ENCODE measurements at regions of chr12 and their contacts with region 1.

Region 1: DNA sequence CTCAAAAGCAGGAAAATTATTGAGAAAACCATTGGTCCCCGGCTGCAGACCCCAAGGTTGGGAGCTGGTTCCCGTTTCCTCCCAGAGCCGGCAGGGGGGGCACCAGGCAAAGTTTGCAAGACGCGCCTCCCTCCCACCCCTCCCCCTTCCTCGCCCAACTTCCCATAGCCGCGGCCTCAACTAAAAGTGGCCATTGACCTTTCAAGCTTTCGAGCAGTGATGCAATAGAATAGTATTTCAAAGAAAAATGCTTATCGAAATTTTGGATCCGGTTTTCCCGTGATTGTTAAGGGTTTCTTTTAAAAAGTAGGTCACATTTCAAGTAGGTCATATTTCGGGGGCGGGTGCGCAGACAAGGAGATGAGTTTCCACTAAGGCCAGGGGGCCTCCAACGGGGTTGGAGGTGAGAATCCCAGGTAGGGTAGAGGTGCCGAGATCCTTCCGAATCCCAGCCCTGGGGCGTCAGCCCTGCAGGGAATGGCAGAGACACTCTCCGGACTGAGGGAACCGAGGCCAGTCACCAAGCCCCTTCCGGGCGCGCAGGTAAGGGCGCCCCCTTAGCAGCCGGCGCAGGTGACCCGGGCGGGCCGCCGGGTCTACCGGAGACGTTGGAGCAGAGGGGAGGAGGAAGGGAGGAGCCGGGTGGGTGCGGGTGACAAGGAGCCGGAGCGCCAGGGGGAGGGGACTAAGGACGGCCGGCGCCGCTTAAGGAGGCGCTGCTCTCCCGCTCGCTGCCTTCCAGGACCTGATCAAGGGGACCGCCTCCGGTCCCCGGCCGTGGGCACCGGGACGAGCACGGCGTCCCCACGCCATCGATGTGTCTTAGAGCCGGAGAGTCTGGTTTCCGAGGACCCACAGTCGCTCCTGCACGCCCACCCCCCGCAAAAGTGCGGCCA is 2.6 kb upstream of the SOCS2 start:
- DNase-seq: peak; percentile 49 to 88 (median 68)
- ATAC-seq: peak; percentile 44
- H3K4me3 ChIP-seq: peak overlapping the region; percentile 97
- H3K4me3 Mint-ChIP-seq: peak overlapping the region; percentile 95
- H3K27ac ChIP-seq: peak overlapping the region; percentile 67 to 82
- H3K27ac Mint-ChIP-seq: peak overlapping the region; percentile 86
- H3K4me1 ChIP-seq: peaks cover 43% of the 10 kb centered on the region
- H3K4me1 Mint-ChIP-seq: peaks cover 28% of the 10 kb centered on the region
- H3K27me3 ChIP-seq: no peaks in the 10 kb centered on the region
- H3K27me3 Mint-ChIP-seq: no peaks in the 10 kb centered on the region
- CTCF ChIP-seq: peak; percentile 85

Region 2: GRCh38 chr12:93378373-93379325 is 191.3 kb before region 1 on chr12:
- CTCF ChIA-PET with region 1: no interaction called
- POLR2A ChIA-PET with region 1: no interaction called
- intact Hi-C with region 1: loop called in 1 of 2 experiments (anchors 5 kb)
- DNase-seq: peak; percentile 33 to 86 (median 47)
- ATAC-seq: peak; percentile 54
- H3K4me3 ChIP-seq: peak overlapping the region; percentile 74
- H3K4me3 Mint-ChIP-seq: peak overlapping the region; percentile 100
- H3K27ac ChIP-seq: peak overlapping the region; percentile 85 to 88
- H3K27ac Mint-ChIP-seq: peak overlapping the region; percentile 99
- H3K4me1 ChIP-seq: peaks cover 36% of the 10 kb centered on the region
- H3K4me1 Mint-ChIP-seq: peaks cover 52% of the 10 kb centered on the region
- H3K27me3 ChIP-seq: no peaks in the 10 kb centered on the region
- H3K27me3 Mint-ChIP-seq: no peaks in the 10 kb centered on the region
- CTCF ChIP-seq: no peak

Region 3: GRCh38 chr12:93502802-93503623 is 66.9 kb before region 1 on chr12:
- CTCF ChIA-PET with region 1: interaction called, 10 read pairs
- POLR2A ChIA-PET with region 1: interaction called, 3 read pairs
- intact Hi-C with region 1: loop called (anchors 2 to 5 kb)
- DNase-seq: peak; percentile 36 to 79 (median 59)
- ATAC-seq: peak; percentile 29
- H3K4me3 ChIP-seq: no peak overlapping the region
- H3K4me3 Mint-ChIP-seq: no peak overlapping the region
- H3K27ac ChIP-seq: no peak overlapping the region
- H3K27ac Mint-ChIP-seq: no peak overlapping the region
- H3K4me1 ChIP-seq: no peaks in the 10 kb centered on the region
- H3K4me1 Mint-ChIP-seq: no peaks in the 10 kb centered on the region
- H3K27me3 ChIP-seq: no peaks in the 10 kb centered on the region
- H3K27me3 Mint-ChIP-seq: no peaks in the 10 kb centered on the region
- CTCF ChIP-seq: peak; percentile 91

Region 4: GRCh38 chr12:93766796-93767523 is 197.1 kb after region 1 on chr12:
- CTCF ChIA-PET with region 1: interaction called, 7 read pairs
- POLR2A ChIA-PET with region 1: no interaction called
- intact Hi-C with region 1: loop called in 1 of 2 experiments (anchors 5 kb)
- DNase-seq: peak in 9 of 14 experiments; percentile 9 to 68 (median 23)
- ATAC-seq: peak; percentile 63
- H3K4me3 ChIP-seq: no peak overlapping the region
- H3K4me3 Mint-ChIP-seq: no peak overlapping the region
- H3K27ac ChIP-seq: no peak overlapping the region
- H3K27ac Mint-ChIP-seq: no peak overlapping the region
- H3K4me1 ChIP-seq: peaks cover 2% of the 10 kb centered on the region
- H3K4me1 Mint-ChIP-seq: peaks cover 27% of the 10 kb centered on the region
- H3K27me3 ChIP-seq: no peaks in the 10 kb centered on the region
- H3K27me3 Mint-ChIP-seq: no peaks in the 10 kb centered on the region
- CTCF ChIP-seq: peak; percentile 26

Region 5: GRCh38 chr12:93979189-93979588 is 409.3 kb after region 1 on chr12:
- CTCF ChIA-PET with region 1: interaction called, 5 read pairs
- POLR2A ChIA-PET with region 1: no interaction called
- intact Hi-C with region 1: loop called in 1 of 2 experiments (anchors 5 kb)
- DNase-seq: peak in 7 of 14 experiments; percentile 3 to 56 (median 32)
- ATAC-seq: no peak
- H3K4me3 ChIP-seq: no peak overlapping the region
- H3K4me3 Mint-ChIP-seq: no peak overlapping the region
- H3K27ac ChIP-seq: no peak overlapping the region
- H3K27ac Mint-ChIP-seq: no peak overlapping the region
- H3K4me1 ChIP-seq: no peaks in the 10 kb centered on the region
- H3K4me1 Mint-ChIP-seq: peaks cover 21% of the 10 kb centered on the region
- H3K27me3 ChIP-seq: no peaks in the 10 kb centered on the region
- H3K27me3 Mint-ChIP-seq: no peaks in the 10 kb centered on the region
- CTCF ChIP-seq: peak; percentile 13

Region 6: DNA sequence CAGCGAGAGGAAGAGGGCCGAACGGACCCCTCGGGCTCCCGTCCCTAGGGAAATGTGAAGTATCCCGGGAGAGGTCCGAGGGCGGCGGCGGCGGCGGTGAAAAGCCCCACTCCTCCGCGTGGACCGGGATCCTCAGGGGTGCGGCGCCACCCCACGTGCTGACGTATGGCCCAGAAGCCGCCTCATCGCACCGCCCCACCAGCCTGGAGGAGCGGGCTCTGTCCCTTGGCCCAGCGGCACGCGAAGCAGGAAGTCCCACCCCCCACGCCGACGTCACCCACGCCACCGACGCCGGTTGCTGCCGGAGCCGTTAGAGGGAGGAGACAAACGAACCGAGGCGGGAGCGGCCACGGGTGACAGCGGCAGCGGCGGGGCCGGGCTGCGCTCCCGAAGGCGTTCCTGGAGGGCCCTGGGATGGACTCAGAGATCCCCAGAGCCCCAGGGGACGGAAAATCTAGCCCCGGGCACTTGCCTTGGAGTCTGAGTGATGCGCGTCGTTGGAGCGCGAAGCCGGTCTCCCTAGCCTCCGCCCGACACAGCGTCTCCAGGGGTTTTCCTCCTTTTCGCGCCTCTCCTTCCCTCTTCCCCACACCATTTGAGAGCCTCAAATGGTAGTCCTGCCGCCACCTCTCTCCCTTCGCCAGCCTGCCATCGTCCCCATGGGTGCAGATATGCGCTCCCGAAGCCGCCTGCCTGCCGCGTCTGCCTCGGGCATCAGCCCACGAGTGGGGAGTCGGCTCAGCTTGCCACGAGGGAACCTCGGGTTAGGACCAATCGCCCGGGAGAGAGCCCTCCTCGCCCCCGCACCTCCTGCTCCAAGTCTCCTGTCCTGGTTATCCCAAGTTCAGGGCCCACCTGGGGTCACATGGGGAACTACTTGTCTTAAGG is 890.1 kb after region 1 on chr12 and contains the start of gene CEP83:
- CTCF ChIA-PET with region 1: no interaction called
- POLR2A ChIA-PET with region 1: no interaction called
- intact Hi-C with region 1: loop called in 1 of 2 experiments (anchors 10 kb)
- DNase-seq: peak; percentile 89 to 99 (median 98)
- ATAC-seq: peak; percentile 97
- H3K4me3 ChIP-seq: peak within 1 kb of the TSS; percentile 96
- H3K4me3 Mint-ChIP-seq: peak within 1 kb of the TSS; percentile 94
- H3K27ac ChIP-seq: peak within 1 kb of the TSS; percentile 69 to 87
- H3K27ac Mint-ChIP-seq: peak within 1 kb of the TSS; percentile 92
- H3K4me1 ChIP-seq: peaks cover 10% of the 10 kb centered on the region
- H3K4me1 Mint-ChIP-seq: peaks cover 31% of the 10 kb centered on the region
- H3K27me3 ChIP-seq: no peaks in the 10 kb centered on the region
- H3K27me3 Mint-ChIP-seq: peaks cover 8% of the 10 kb centered on the region
- CTCF ChIP-seq: no peak
- total RNA-seq, gene CEP83: 9.4 to 12.1 TPM

Region 7: DNA sequence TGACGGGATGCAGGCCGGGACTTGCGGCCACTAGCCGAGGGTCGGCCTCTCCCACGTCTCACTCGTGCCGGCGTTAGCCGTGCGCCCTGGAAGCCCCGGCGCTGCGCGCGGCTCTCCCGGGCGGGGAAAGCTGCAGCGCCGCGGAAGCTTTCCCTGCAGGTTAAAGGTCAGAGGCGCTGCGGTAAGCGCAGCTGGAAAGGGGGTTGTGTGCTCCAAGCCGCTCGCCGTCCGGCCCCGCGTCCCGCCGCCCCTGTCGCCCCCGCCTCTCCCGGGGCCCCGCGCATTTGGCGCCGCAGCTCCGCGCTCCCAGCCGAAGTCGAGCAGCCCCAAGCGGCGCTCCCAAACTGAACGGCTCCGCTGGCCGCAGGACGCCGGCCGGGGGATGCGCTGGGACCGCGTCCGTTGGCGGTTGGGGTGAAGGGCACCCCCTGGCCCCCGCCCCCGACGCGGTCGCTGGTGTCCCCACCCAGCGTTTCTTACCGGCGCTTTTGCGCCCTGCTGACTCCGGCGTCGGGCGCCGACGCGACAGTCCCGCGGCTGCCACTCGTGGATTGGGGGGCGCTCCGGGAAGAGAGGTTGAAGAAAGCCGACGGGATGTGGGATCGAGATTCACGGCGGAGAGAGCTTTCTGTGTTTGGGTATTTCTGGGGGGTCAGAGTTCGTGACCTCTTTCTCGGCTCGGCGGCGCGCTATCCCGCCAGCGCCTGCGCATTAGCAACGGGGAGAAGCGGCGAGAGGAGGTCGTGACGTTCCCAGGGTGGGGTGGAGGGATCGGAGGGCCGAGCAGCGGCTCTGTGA is 1503.2 kb after region 1 on chr12 and contains the start of gene NR2C1:
- CTCF ChIA-PET with region 1: no interaction called
- POLR2A ChIA-PET with region 1: no interaction called
- intact Hi-C with region 1: loop called in 1 of 2 experiments (anchors 10 kb)
- DNase-seq: peak; percentile 85 to 97 (median 90)
- ATAC-seq: peak; percentile 98
- H3K4me3 ChIP-seq: peak within 1 kb of the TSS; percentile 84
- H3K4me3 Mint-ChIP-seq: peak within 1 kb of the TSS; percentile 98
- H3K27ac ChIP-seq: peak within 1 kb of the TSS; percentile 62 to 72
- H3K27ac Mint-ChIP-seq: peak within 1 kb of the TSS; percentile 89
- H3K4me1 ChIP-seq: peaks cover 17% of the 10 kb centered on the region
- H3K4me1 Mint-ChIP-seq: peaks cover 23% of the 10 kb centered on the region
- H3K27me3 ChIP-seq: no peaks in the 10 kb centered on the region
- H3K27me3 Mint-ChIP-seq: no peaks in the 10 kb centered on the region
- CTCF ChIP-seq: no peak
- total RNA-seq, gene NR2C1: 48.3 to 58.9 TPM